Psoas muscle (tissue), 8 donors: ENCODE measurements at regions of chr11 and their contacts with region 1.

Region 1: DNA sequence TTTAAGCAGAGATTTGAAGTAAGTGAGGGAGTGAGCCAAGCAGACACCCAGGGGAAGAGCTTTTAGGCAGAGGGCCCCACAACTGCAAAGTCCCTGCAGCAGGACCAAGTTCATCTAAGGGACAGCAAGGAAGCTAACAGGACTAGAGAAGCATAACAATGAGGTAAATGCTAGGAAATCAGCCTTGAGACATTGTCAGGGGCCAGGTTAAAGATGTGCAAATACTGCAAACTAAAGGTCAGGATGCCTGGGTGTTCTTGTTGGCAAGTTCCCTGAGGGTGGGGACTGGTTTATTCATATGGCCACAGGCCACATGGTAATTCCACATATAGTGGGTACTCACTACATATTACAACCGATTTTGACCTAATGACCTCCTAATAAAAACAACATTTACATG is 399.2 kb upstream of the NARS2 start:
- DNase-seq: no peak
- ATAC-seq: no peak
- H3K4me3 ChIP-seq: no peak overlapping the region
- H3K27ac ChIP-seq: no peak overlapping the region
- H3K4me1 ChIP-seq: no peaks in the 10 kb centered on the region
- H3K27me3 ChIP-seq: no peaks in the 10 kb centered on the region
- CTCF ChIP-seq: no peak

Region 2: GRCh38 chr11:78902771-78903507 is 70.9 kb before region 1 on chr11:
- intact Hi-C with region 1: no loop called
- DNase-seq: no peak
- ATAC-seq: no peak
- H3K4me3 ChIP-seq: no peak overlapping the region
- H3K27ac ChIP-seq: no peak overlapping the region
- H3K4me1 ChIP-seq: no peaks in the 10 kb centered on the region
- H3K27me3 ChIP-seq: no peaks in the 10 kb centered on the region
- CTCF ChIP-seq: no peak

Region 3: DNA sequence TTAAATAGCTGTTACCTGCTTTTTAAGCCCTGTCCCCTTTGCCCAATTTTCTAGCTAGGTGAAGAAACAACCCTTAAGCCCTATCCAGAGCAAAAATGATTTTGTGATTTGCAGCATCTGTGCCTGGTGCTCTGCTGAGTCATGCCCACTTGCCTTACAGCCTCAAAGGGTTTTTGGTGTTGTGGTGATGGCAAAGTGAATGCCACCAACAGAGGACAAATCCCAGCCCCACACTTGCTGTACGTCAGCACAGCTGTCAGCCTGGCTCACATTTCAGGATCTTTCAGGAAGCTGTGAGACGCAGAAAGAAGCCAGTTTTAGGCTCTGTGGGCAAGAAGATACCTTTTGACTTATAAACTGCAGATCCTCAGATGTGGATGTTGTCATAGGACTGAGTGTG is 65.2 kb after region 1 on chr11:
- intact Hi-C with region 1: loop called in 1 of 2 experiments (anchors 10 kb)
- DNase-seq: no peak
- ATAC-seq: no peak
- H3K4me3 ChIP-seq: no peak overlapping the region
- H3K27ac ChIP-seq: no peak overlapping the region
- H3K4me1 ChIP-seq: no peaks in the 10 kb centered on the region
- H3K27me3 ChIP-seq: no peaks in the 10 kb centered on the region
- CTCF ChIP-seq: no peak

Region 4: GRCh38 chr11:79100093-79100910 is 126.4 kb after region 1 on chr11:
- intact Hi-C with region 1: no loop called
- DNase-seq: no peak
- ATAC-seq: peak; percentile 55 to 82 (median 75)
- H3K4me3 ChIP-seq: no peak overlapping the region
- H3K27ac ChIP-seq: no peak overlapping the region
- H3K4me1 ChIP-seq: peaks cover 11% of the 10 kb centered on the region
- H3K27me3 ChIP-seq: no peaks in the 10 kb centered on the region
- CTCF ChIP-seq: peak; percentile 62